B cell (primary cell): ENCODE measurements at regions of chr12 and their contacts with region 1.

Region 1: GRCh38 chr12:92539976-92540781 is 162.6 kb upstream of the PLEKHG7 start:
- DNase-seq: peak; percentile 52
- ATAC-seq: peak; percentile 59
- H3K4me3 ChIP-seq: peak overlapping the region in 1 of 5 experiments; percentile 27
- H3K4me3 Mint-ChIP-seq: peak overlapping the region; percentile 84
- H3K27ac ChIP-seq: peak overlapping the region; percentile 68 to 93
- H3K27ac Mint-ChIP-seq: peak overlapping the region; percentile 97
- H3K4me1 ChIP-seq: peaks cover 64 to 68% of the 10 kb centered on the region in 2 donors
- H3K4me1 Mint-ChIP-seq: peaks cover 71% of the 10 kb centered on the region
- H3K27me3 ChIP-seq: no peaks in the 10 kb centered on the region
- H3K27me3 Mint-ChIP-seq: no peaks in the 10 kb centered on the region
- CTCF ChIP-seq: no peak

Region 2: DNA sequence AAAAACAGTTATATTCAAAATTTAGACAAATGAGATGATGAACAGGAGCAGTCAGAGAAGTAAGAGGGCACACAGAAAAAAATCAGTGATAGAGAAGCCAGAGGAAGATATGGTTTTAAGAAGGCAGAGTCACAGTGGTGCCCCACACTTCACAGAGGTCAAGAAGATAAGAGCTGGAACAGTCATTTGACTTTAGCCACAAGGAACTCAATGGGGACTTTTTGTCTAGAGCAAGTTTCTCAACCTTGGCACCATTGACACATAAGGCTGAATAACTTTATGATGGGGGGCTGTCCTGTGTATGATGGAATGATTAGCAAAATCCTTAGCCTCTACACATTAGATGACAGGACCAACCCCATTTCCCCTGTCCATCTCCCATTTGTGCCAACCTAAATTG is 10.2 kb before region 1 on chr12:
- CTCF ChIA-PET with region 1: no interaction called
- POLR2A ChIA-PET with region 1: interaction called, 5 read pairs
- intact Hi-C with region 1: loop called (anchors 2 kb)
- DNase-seq: no peak
- ATAC-seq: no peak
- H3K4me3 ChIP-seq: no peak overlapping the region
- H3K4me3 Mint-ChIP-seq: no peak overlapping the region
- H3K27ac ChIP-seq: no peak overlapping the region
- H3K27ac Mint-ChIP-seq: peak overlapping the region; percentile 22
- H3K4me1 ChIP-seq: peaks cover 0 to 4% of the 10 kb centered on the region in 2 donors
- H3K4me1 Mint-ChIP-seq: peaks cover 16% of the 10 kb centered on the region
- H3K27me3 ChIP-seq: no peaks in the 10 kb centered on the region
- H3K27me3 Mint-ChIP-seq: no peaks in the 10 kb centered on the region
- CTCF ChIP-seq: no peak

Region 3: DNA sequence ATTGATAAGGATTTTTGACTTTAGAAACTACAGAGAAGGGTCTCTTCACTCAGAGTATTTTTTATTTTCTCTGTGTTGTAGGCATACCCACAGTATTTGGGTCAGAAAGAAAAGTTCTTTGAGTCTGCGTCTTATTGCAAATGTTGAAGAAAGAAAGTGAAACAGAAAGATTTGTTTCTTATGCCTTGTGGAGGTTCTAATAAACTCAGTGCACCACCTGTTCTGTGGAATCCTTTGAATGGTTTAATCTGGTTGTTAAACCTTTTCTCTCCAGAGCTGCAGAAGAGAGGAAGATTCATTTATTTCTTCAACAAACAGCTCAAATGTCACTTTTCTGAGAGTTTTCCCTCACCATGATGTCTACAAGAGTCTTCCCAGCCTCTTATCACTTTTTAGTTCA is 16.0 kb after region 1 on chr12:
- CTCF ChIA-PET with region 1: interaction called, 5 read pairs
- POLR2A ChIA-PET with region 1: interaction called, 5 read pairs
- intact Hi-C with region 1: loop called (anchors 2 kb)
- DNase-seq: peak; percentile 61
- ATAC-seq: peak; percentile 59
- H3K4me3 ChIP-seq: peak overlapping the region in 3 of 5 experiments; percentile 28 to 50 (median 33)
- H3K4me3 Mint-ChIP-seq: peak overlapping the region; percentile 71
- H3K27ac ChIP-seq: peak overlapping the region; percentile 72 to 73
- H3K27ac Mint-ChIP-seq: peak overlapping the region; percentile 86
- H3K4me1 ChIP-seq: peaks cover 57 to 65% of the 10 kb centered on the region in 2 donors
- H3K4me1 Mint-ChIP-seq: peaks cover 61% of the 10 kb centered on the region
- H3K27me3 ChIP-seq: no peaks in the 10 kb centered on the region
- H3K27me3 Mint-ChIP-seq: no peaks in the 10 kb centered on the region
- CTCF ChIP-seq: no peak